Naive thymus-derived CD4-positive, alpha-beta T cell (primary cell): ENCODE measurements at regions of chr6 and their contacts with region 1.

Region 1: GRCh38 chr6:6131492-6132109 is 124.9 kb upstream of the NRN1 start:
- DNase-seq: peak in 5 of 9 donors; percentile 3 to 31 (median 21)
- ATAC-seq: peak; percentile 52
- H3K4me3 ChIP-seq: no peak overlapping the region
- H3K4me3 Mint-ChIP-seq: no peak overlapping the region
- H3K27ac ChIP-seq: no peak overlapping the region
- H3K27ac Mint-ChIP-seq: no peak overlapping the region
- H3K4me1 ChIP-seq: no peaks in the 10 kb centered on the region
- H3K4me1 Mint-ChIP-seq: no peaks in the 10 kb centered on the region
- H3K27me3 ChIP-seq: no peaks in the 10 kb centered on the region
- H3K27me3 Mint-ChIP-seq: peaks cover 0 to 13% (median 8%) of the 10 kb centered on the region in 5 donors

Region 2: DNA sequence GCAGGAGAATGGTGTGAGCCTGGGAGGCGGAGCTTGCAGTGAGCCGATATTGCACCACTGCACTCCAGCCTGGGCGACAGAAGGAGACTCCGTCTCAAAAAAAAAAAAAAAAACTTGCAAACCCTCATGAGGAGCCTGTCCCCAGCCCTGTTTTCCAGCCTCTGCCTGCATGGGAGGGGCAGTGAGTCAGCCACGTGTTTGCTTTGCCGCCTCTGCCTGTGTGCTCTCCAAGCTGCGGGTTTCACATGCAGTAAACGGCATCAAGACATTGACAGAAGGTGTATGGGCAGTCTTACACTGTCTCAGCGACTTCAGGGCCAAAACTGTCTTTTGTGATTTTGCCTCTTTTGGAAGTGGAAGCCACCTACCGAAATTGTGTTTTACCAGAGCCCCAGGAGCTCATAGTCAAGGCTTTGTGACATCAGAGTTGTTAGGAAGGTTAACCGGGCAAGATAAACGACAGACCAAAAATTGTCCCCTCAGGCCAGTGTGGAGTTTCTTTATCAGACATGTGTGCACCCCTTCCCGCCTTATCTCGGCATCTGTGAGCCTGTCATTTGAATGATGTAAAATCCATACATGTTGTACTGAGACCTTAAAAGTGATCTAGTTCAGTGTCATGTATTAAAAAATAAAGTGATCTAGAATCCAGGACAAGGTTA is 1180.6 kb before region 1 on chr6:
- CTCF ChIA-PET with region 1: no interaction called
- POLR2A ChIA-PET with region 1: no interaction called
- intact Hi-C with region 1: loop called in 1 of 2 experiments (anchors 5 kb)
- DNase-seq: no peak
- ATAC-seq: no peak
- H3K4me3 ChIP-seq: no peak overlapping the region
- H3K4me3 Mint-ChIP-seq: no peak overlapping the region
- H3K27ac ChIP-seq: no peak overlapping the region
- H3K27ac Mint-ChIP-seq: no peak overlapping the region
- H3K4me1 ChIP-seq: no peaks in the 10 kb centered on the region
- H3K4me1 Mint-ChIP-seq: peaks cover 0 to 6% (median 0%) of the 10 kb centered on the region in 7 donors
- H3K27me3 ChIP-seq: no peaks in the 10 kb centered on the region
- H3K27me3 Mint-ChIP-seq: no peaks in the 10 kb centered on the region

Region 3: GRCh38 chr6:6074190-6074589 is 57.4 kb before region 1 on chr6:
- CTCF ChIA-PET with region 1: no interaction called
- POLR2A ChIA-PET with region 1: no interaction called
- intact Hi-C with region 1: no loop called
- DNase-seq: no peak
- ATAC-seq: no peak
- H3K4me3 ChIP-seq: no peak overlapping the region
- H3K4me3 Mint-ChIP-seq: no peak overlapping the region
- H3K27ac ChIP-seq: no peak overlapping the region
- H3K27ac Mint-ChIP-seq: no peak overlapping the region
- H3K4me1 ChIP-seq: no peaks in the 10 kb centered on the region
- H3K4me1 Mint-ChIP-seq: no peaks in the 10 kb centered on the region
- H3K27me3 ChIP-seq: peaks cover 0 to 9% of the 10 kb centered on the region in 2 donors
- H3K27me3 Mint-ChIP-seq: peaks cover 29 to 62% (median 54%) of the 10 kb centered on the region in 5 donors

Region 4: GRCh38 chr6:6091608-6092002 is 40.0 kb before region 1 on chr6:
- CTCF ChIA-PET with region 1: no interaction called
- POLR2A ChIA-PET with region 1: no interaction called
- intact Hi-C with region 1: loop called in 1 of 2 experiments (anchors 1 kb)
- DNase-seq: no peak
- ATAC-seq: no peak
- H3K4me3 ChIP-seq: no peak overlapping the region
- H3K4me3 Mint-ChIP-seq: no peak overlapping the region
- H3K27ac ChIP-seq: no peak overlapping the region
- H3K27ac Mint-ChIP-seq: no peak overlapping the region
- H3K4me1 ChIP-seq: no peaks in the 10 kb centered on the region
- H3K4me1 Mint-ChIP-seq: peaks cover 0 to 4% (median 0%) of the 10 kb centered on the region in 7 donors
- H3K27me3 ChIP-seq: no peaks in the 10 kb centered on the region
- H3K27me3 Mint-ChIP-seq: peaks cover 3 to 20% (median 8%) of the 10 kb centered on the region in 5 donors

Region 5: GRCh38 chr6:6270948-6271535 is 139.4 kb after region 1 on chr6:
- CTCF ChIA-PET with region 1: no interaction called
- POLR2A ChIA-PET with region 1: no interaction called
- intact Hi-C with region 1: no loop called
- DNase-seq: no peak
- ATAC-seq: peak; percentile 41
- H3K4me3 ChIP-seq: no peak overlapping the region
- H3K4me3 Mint-ChIP-seq: no peak overlapping the region
- H3K27ac ChIP-seq: no peak overlapping the region
- H3K27ac Mint-ChIP-seq: no peak overlapping the region
- H3K4me1 ChIP-seq: no peaks in the 10 kb centered on the region
- H3K4me1 Mint-ChIP-seq: no peaks in the 10 kb centered on the region
- H3K27me3 ChIP-seq: no peaks in the 10 kb centered on the region
- H3K27me3 Mint-ChIP-seq: peaks cover 5 to 66% (median 38%) of the 10 kb centered on the region in 5 donors